CD4-positive, alpha-beta T cell (primary cell): ENCODE measurements at regions of chr6 and their contacts with region 1.

Region 1: GRCh38 chr6:106546691-106547414 is 82.4 kb downstream of the RTN4IP1 start:
- DNase-seq: peak in 2 of 14 experiments; percentile 47 to 54
- ATAC-seq: no peak
- H3K4me3 ChIP-seq: no peak overlapping the region
- H3K4me3 Mint-ChIP-seq: no peak overlapping the region
- H3K27ac ChIP-seq: peak overlapping the region in 1 of 2 donors; percentile 3
- H3K27ac Mint-ChIP-seq: peak overlapping the region; percentile 74
- H3K4me1 ChIP-seq: peaks cover 6% of the 10 kb centered on the region
- H3K4me1 Mint-ChIP-seq: peaks cover 44% of the 10 kb centered on the region
- H3K27me3 ChIP-seq: no peaks in the 10 kb centered on the region
- H3K27me3 Mint-ChIP-seq: no peaks in the 10 kb centered on the region
- CTCF ChIP-seq: no peak

Region 2: GRCh38 chr6:106477790-106478189 is 69.1 kb before region 1 on chr6:
- CTCF ChIA-PET with region 1: no interaction called
- POLR2A ChIA-PET with region 1: no interaction called
- intact Hi-C with region 1: no loop called
- DNase-seq: peak in 3 of 14 experiments; percentile 5 to 25 (median 24)
- ATAC-seq: no peak
- H3K4me3 ChIP-seq: no peak overlapping the region
- H3K4me3 Mint-ChIP-seq: no peak overlapping the region
- H3K27ac ChIP-seq: no peak overlapping the region
- H3K27ac Mint-ChIP-seq: no peak overlapping the region
- H3K4me1 ChIP-seq: no peaks in the 10 kb centered on the region
- H3K4me1 Mint-ChIP-seq: peaks cover 17% of the 10 kb centered on the region
- H3K27me3 ChIP-seq: no peaks in the 10 kb centered on the region
- H3K27me3 Mint-ChIP-seq: no peaks in the 10 kb centered on the region
- CTCF ChIP-seq: no peak

Region 3: GRCh38 chr6:106534564-106534982 is 12.3 kb before region 1 on chr6:
- CTCF ChIA-PET with region 1: interaction called, 3 read pairs
- POLR2A ChIA-PET with region 1: interaction called, 6 read pairs
- intact Hi-C with region 1: loop called in 1 of 2 experiments (anchors 2 kb)
- DNase-seq: peak in 5 of 14 experiments; percentile 28 to 55 (median 46)
- ATAC-seq: peak; percentile 49
- H3K4me3 ChIP-seq: no peak overlapping the region
- H3K4me3 Mint-ChIP-seq: no peak overlapping the region
- H3K27ac ChIP-seq: no peak overlapping the region
- H3K27ac Mint-ChIP-seq: peak overlapping the region; percentile 17
- H3K4me1 ChIP-seq: peaks cover 24% of the 10 kb centered on the region
- H3K4me1 Mint-ChIP-seq: peaks cover 90% of the 10 kb centered on the region
- H3K27me3 ChIP-seq: no peaks in the 10 kb centered on the region
- H3K27me3 Mint-ChIP-seq: no peaks in the 10 kb centered on the region
- CTCF ChIP-seq: no peak

Region 4: DNA sequence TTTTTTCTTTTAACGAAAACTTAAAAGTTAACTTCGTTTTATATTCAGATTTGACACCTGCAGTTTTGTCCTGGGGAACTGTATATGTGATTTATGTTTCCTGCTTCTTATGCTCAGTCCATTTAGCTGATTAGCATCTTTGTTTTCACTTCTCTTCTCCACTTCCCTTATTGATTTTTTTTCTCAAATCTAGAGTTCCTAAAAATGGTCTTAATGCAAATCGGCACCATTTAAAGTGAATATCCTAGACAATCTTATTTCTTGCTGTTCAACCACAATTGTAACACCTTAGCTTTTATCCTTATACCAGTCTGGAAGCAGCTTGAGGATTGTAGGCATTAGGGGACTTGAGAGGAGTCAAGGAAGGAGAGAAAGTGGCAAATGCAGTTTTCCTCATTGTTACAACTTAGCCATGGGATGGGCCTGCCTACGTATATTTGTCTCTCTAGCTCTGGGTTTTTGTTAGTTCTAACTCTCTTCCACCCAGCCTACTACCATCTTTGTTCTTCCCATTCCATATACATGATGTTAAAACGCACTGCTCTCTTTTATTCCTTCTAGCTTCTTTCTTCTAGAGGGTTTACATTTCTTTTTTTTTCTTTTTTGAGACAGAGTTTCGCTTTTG is 91.0 kb after region 1 on chr6:
- CTCF ChIA-PET with region 1: no interaction called
- POLR2A ChIA-PET with region 1: no interaction called
- intact Hi-C with region 1: no loop called
- DNase-seq: no peak
- ATAC-seq: no peak
- H3K4me3 ChIP-seq: no peak overlapping the region
- H3K4me3 Mint-ChIP-seq: no peak overlapping the region
- H3K27ac ChIP-seq: no peak overlapping the region
- H3K27ac Mint-ChIP-seq: no peak overlapping the region
- H3K4me1 ChIP-seq: peaks cover 10% of the 10 kb centered on the region
- H3K4me1 Mint-ChIP-seq: peaks cover 45% of the 10 kb centered on the region
- H3K27me3 ChIP-seq: no peaks in the 10 kb centered on the region
- H3K27me3 Mint-ChIP-seq: no peaks in the 10 kb centered on the region
- CTCF ChIP-seq: no peak